ENCODE measurements at regions of chr4 and their contacts with region 1.

Region 1: DNA sequence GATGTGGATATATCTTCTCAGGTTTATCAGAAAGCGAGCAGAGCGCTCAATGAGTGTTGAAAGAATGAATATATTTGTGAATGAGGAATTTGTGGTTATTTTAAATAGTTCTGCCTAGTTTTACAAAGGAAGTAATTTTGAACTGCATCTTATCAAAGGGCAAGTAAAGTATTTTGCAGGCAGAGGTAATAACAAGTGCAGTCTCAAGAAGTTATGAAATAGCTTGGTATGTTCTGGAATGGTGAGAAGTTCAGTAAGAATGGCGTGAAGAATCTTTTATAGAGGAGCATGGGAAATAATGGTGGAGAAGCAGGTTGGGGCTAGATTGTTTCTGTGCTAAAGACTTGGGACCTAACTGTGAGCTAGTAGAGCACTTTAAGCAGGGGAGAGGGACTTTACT is 10.9 kb downstream of the TMA16 start:
- DNase-seq: no peak
- ATAC-seq: no peak
- H3K4me3 ChIP-seq: no peak overlapping the region
- H3K27ac ChIP-seq: no peak overlapping the region
- H3K4me1 ChIP-seq: no peaks in the 10 kb centered on the region
- H3K27me3 ChIP-seq: no peaks in the 10 kb centered on the region
- CTCF ChIP-seq: no peak
- POLR2A ChIP-seq: no peak

Region 2: GRCh38 chr4:163309466-163309865 is 195.9 kb before region 1 on chr4:
- in situ Hi-C with region 1: no loop called
- intact Hi-C with region 1: no loop called
- DNase-seq: no peak
- ATAC-seq: no peak
- H3K4me3 ChIP-seq: no peak overlapping the region
- H3K27ac ChIP-seq: no peak overlapping the region
- H3K4me1 ChIP-seq: no peaks in the 10 kb centered on the region
- H3K27me3 ChIP-seq: no peaks in the 10 kb centered on the region
- CTCF ChIP-seq: no peak
- POLR2A ChIP-seq: no peak

Region 3: GRCh38 chr4:163404580-163404979 is 100.8 kb before region 1 on chr4:
- in situ Hi-C with region 1: loop called in 1 of 4 experiments (anchors 25 kb)
- intact Hi-C with region 1: no loop called
- DNase-seq: no peak
- ATAC-seq: no peak
- H3K4me3 ChIP-seq: no peak overlapping the region
- H3K27ac ChIP-seq: no peak overlapping the region
- H3K4me1 ChIP-seq: no peaks in the 10 kb centered on the region
- H3K27me3 ChIP-seq: no peaks in the 10 kb centered on the region
- CTCF ChIP-seq: no peak
- POLR2A ChIP-seq: no peak

Measured in gastrocnemius medialis (tissue), 4 donors.